B cell (primary cell): ENCODE measurements at regions of chr2 and their contacts with region 1.

Region 1: GRCh38 chr2:27370026-27370815 is at the starts of genes EIF2B4 and SNX17:
- DNase-seq: peak; percentile 99
- ATAC-seq: peak; percentile 83
- H3K4me3 ChIP-seq: peak within 1 kb of the TSS; percentile 86 to 96 (median 88)
- H3K4me3 Mint-ChIP-seq: peak within 1 kb of the TSS; percentile 96
- H3K27ac ChIP-seq: peak within 1 kb of the TSS; percentile 84 to 95
- H3K27ac Mint-ChIP-seq: peak within 1 kb of the TSS; percentile 100
- H3K4me1 ChIP-seq: peaks cover 31 to 34% of the 10 kb centered on the region in 2 donors
- H3K4me1 Mint-ChIP-seq: peaks cover 31% of the 10 kb centered on the region
- H3K27me3 ChIP-seq: no peaks in the 10 kb centered on the region
- H3K27me3 Mint-ChIP-seq: no peaks in the 10 kb centered on the region
- CTCF ChIP-seq: peak; percentile 77
- total RNA-seq, gene EIF2B4: 50.5 and 56.7 TPM in 2 replicates
- total RNA-seq, gene SNX17: 158 and 162 TPM in 2 replicates

Region 2: GRCh38 chr2:27133905-27134780 is 236.1 kb before region 1 on chr2 and contains the start of gene PREB:
- CTCF ChIA-PET with region 1: no interaction called
- POLR2A ChIA-PET with region 1: no interaction called
- intact Hi-C with region 1: loop called (anchors 1 kb)
- DNase-seq: peak; percentile 97
- ATAC-seq: peak; percentile 99
- H3K4me3 ChIP-seq: peak within 1 kb of the TSS; percentile 62 to 89 (median 78)
- H3K4me3 Mint-ChIP-seq: peak within 1 kb of the TSS; percentile 96
- H3K27ac ChIP-seq: peak within 1 kb of the TSS in 1 of 2 donors; percentile 86
- H3K27ac Mint-ChIP-seq: peak within 1 kb of the TSS; percentile 97
- H3K4me1 ChIP-seq: peaks cover 17 to 25% of the 10 kb centered on the region in 2 donors
- H3K4me1 Mint-ChIP-seq: peaks cover 24% of the 10 kb centered on the region
- H3K27me3 ChIP-seq: no peaks in the 10 kb centered on the region
- H3K27me3 Mint-ChIP-seq: no peaks in the 10 kb centered on the region
- CTCF ChIP-seq: no peak
- total RNA-seq, gene PREB: 44.6 and 46.0 TPM in 2 replicates

Region 3: DNA sequence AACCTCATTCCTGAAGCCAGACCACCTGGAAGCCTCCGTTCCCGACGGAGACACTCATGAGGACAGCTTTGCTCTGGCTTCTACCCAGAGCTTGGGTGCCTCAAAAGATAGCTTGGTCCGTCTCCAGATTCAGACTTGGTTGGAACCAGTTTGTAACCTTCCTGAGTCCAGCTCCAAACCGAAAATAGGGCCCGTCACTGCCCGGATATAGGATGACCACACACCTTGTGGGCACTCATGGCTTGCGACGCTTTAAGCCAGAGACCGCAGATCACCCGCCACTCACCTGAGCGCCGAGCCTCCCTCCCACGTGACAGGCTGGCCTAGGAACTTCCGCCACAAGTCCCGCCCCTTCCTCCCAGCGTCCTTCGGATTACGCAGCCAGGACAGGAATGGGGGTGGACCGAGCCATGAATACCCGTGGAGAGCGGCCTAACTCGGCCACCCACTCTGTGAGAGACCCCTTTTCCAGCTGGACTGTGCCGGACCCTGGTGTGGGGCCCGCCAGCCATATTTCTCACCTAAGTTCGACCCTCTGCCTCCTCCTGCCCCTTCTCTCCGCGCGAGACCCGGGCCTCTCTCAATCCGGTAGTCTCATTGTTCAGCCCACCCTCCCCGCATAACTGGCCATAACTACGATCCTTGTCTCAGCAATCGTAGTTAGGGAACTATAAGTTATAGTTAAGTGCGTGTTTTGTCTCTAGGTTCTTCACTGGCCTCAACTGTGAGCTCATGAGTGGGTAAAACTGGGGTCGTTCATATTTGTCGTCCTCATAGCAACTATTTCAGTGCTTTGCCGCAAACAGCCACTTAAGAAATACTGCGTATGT is 47.2 kb before region 1 on chr2 and contains the start of gene MPV17:
- CTCF ChIA-PET with region 1: interaction called, 5 read pairs
- POLR2A ChIA-PET with region 1: interaction called, 3 read pairs
- intact Hi-C with region 1: loop called (anchors 1 kb)
- DNase-seq: peak; percentile 91
- ATAC-seq: peak; percentile 95
- H3K4me3 ChIP-seq: peak within 1 kb of the TSS; percentile 72 to 99 (median 93)
- H3K4me3 Mint-ChIP-seq: peak within 1 kb of the TSS; percentile 99
- H3K27ac ChIP-seq: peak within 1 kb of the TSS; percentile 75 to 96
- H3K27ac Mint-ChIP-seq: peak within 1 kb of the TSS; percentile 97
- H3K4me1 ChIP-seq: peaks cover 12 to 20% of the 10 kb centered on the region in 2 donors
- H3K4me1 Mint-ChIP-seq: peaks cover 27% of the 10 kb centered on the region
- H3K27me3 ChIP-seq: no peaks in the 10 kb centered on the region
- H3K27me3 Mint-ChIP-seq: no peaks in the 10 kb centered on the region
- CTCF ChIP-seq: no peak
- total RNA-seq, gene MPV17: 103 and 111 TPM in 2 replicates

Region 4: DNA sequence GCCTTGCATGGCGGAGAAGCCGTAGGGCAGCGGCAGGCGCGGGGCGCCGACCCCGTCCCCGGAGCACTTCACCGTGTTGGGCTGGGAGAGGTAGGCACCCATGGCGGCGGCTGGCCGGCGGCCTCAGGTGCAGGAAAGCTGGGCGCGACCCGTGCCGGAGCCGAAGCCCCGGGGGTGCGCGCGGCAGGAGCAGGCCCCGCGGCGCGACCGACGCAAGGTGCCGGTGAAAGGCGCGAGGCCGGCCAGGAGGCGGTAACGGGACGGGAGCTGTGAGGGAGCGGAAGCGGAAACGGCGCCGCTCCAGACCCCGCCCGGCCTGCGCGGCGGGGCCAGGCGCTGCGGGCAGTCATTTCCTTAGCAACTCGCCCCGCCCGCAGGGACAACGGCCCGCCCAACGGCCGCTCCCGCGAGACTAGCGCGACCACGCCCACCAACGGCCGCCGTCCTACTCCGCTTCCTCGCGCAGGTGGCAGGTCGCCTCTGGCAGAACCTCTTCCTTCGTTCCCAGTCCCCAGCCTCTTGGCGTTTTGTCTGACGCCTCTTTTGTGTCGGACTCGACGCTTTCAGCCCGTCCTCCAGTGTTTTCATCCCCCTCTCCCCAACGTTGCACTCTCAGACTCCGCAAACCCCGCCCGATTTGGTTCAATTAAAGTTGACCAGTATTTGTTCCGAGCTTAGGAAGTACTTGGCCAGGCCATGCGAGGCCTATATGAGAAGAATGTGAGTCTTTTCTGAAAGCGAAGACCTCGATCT is 39.3 kb after region 1 on chr2 and contains the start of gene PPM1G:
- CTCF ChIA-PET with region 1: interaction called, 6 read pairs
- POLR2A ChIA-PET with region 1: interaction called, 7 read pairs
- intact Hi-C with region 1: loop called (anchors 1 kb)
- DNase-seq: peak; percentile 96
- ATAC-seq: peak; percentile 97
- H3K4me3 ChIP-seq: peak within 1 kb of the TSS; percentile 28 to 96 (median 95)
- H3K4me3 Mint-ChIP-seq: peak within 1 kb of the TSS; percentile 87
- H3K27ac ChIP-seq: peak within 1 kb of the TSS; percentile 76 to 77
- H3K27ac Mint-ChIP-seq: peak within 1 kb of the TSS; percentile 90
- H3K4me1 ChIP-seq: peaks cover 15 to 20% of the 10 kb centered on the region in 2 donors
- H3K4me1 Mint-ChIP-seq: peaks cover 26% of the 10 kb centered on the region
- H3K27me3 ChIP-seq: no peaks in the 10 kb centered on the region
- H3K27me3 Mint-ChIP-seq: peaks cover 13% of the 10 kb centered on the region
- CTCF ChIP-seq: no peak
- total RNA-seq, gene PPM1G: 45.5 and 48.9 TPM in 2 replicates

Region 5: GRCh38 chr2:27582695-27583389 is 212.6 kb after region 1 on chr2 and contains the start of gene ZNF512:
- CTCF ChIA-PET with region 1: no interaction called
- POLR2A ChIA-PET with region 1: no interaction called
- intact Hi-C with region 1: loop called (anchors 2 kb)
- DNase-seq: peak; percentile 93
- ATAC-seq: peak; percentile 94
- H3K4me3 ChIP-seq: peak within 1 kb of the TSS; percentile 66 to 98 (median 80)
- H3K4me3 Mint-ChIP-seq: peak within 1 kb of the TSS; percentile 96
- H3K27ac ChIP-seq: peak within 1 kb of the TSS; percentile 70 to 72
- H3K27ac Mint-ChIP-seq: peak within 1 kb of the TSS; percentile 96
- H3K4me1 ChIP-seq: peaks cover 17 to 29% of the 10 kb centered on the region in 2 donors
- H3K4me1 Mint-ChIP-seq: peaks cover 40% of the 10 kb centered on the region
- H3K27me3 ChIP-seq: no peaks in the 10 kb centered on the region
- H3K27me3 Mint-ChIP-seq: peaks cover 1% of the 10 kb centered on the region
- CTCF ChIP-seq: no peak
- total RNA-seq, gene ZNF512: 65.2 and 72.3 TPM in 2 replicates

Region 6: DNA sequence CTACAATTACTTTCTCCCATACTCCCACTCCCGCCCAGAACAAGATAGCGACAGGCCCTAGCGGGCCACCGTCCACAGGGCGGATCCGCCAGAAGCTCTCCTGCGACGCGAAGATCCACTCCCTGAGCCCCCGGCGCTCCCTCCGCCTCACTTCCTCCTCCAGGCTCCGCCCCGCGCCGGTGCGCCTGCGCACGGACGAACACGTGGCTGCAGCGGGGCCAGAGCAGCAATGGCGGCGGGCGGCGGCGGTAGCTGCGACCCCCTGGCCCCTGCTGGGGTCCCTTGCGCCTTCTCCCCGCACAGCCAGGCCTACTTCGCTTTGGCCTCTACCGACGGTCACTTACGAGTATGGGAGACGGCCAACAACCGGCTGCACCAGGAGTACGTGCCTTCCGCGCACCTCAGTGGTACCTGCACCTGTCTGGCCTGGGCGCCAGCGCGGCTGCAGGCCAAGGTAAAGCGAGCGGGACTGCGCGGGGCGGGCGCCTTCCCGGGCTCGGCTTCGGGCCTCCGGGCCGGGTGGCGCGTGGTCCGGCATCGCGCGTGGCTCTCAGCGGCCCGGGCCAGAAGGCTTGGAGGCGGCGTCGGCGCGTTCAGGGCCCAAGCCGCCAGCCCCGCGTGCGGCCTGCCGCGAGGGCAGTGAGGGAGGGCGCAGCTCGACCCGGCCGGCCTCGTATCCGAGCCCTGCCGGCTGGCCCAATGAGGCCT is 1524.4 kb after region 1 on chr2 and contains the start of gene WDR43:
- CTCF ChIA-PET with region 1: no interaction called
- POLR2A ChIA-PET with region 1: interaction called, 10 read pairs
- intact Hi-C with region 1: no loop called
- DNase-seq: peak; percentile 98
- ATAC-seq: peak; percentile 97
- H3K4me3 ChIP-seq: peak within 1 kb of the TSS; percentile 64 to 89 (median 84)
- H3K4me3 Mint-ChIP-seq: peak within 1 kb of the TSS; percentile 92
- H3K27ac ChIP-seq: peak within 1 kb of the TSS; percentile 71 to 81
- H3K27ac Mint-ChIP-seq: peak within 1 kb of the TSS; percentile 94
- H3K4me1 ChIP-seq: peaks cover 26 to 30% of the 10 kb centered on the region in 2 donors
- H3K4me1 Mint-ChIP-seq: peaks cover 43% of the 10 kb centered on the region
- H3K27me3 ChIP-seq: no peaks in the 10 kb centered on the region
- H3K27me3 Mint-ChIP-seq: no peaks in the 10 kb centered on the region
- CTCF ChIP-seq: no peak
- total RNA-seq, gene WDR43: 48.6 and 51.0 TPM in 2 replicates